Mammary epithelial cell (primary cell): ENCODE measurements at regions of chr17 and their contacts with region 1.

Region 1: DNA sequence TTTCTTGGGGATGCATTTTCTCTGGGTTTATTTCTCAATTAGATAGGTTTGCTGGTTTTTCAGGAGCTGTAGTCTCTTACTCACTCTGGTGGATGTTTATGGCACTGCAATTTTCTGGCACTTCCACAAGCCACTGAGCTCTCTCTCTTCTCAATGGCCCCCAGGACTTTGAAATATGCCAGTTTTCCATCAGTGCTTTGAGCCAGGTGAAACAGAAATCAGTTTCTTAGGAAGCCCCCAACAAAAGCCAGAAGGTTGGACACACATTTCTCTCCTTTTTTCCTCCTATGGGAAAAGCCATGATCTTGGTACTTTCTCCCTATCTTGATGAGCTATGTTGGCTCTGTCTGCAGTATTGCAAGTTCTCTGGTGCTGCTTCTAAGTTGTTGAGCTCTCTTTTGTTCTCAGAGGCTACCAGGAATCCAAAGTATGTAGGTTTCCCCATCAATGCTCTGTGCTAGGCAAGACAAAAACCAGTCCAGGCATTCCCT is 90.7 kb upstream of the SMIM36 start:
- DNase-seq: peak; percentile 27
- H3K4me3 ChIP-seq: no peak overlapping the region
- H3K27ac ChIP-seq: no peak overlapping the region
- H3K4me1 ChIP-seq: no peaks in the 10 kb centered on the region
- H3K27me3 ChIP-seq: no peaks in the 10 kb centered on the region
- CTCF ChIP-seq: peak; percentile 75 to 81

Region 2: GRCh38 chr17:55584050-55584685 is 17.8 kb before region 1 on chr17:
- CTCF ChIA-PET with region 1: no interaction called
- dilution Hi-C with region 1: no loop called
- in situ Hi-C with region 1: no loop called
- intact Hi-C with region 1: loop called (anchors 2 kb)
- DNase-seq: peak; percentile 53
- H3K4me3 ChIP-seq: no peak overlapping the region
- H3K27ac ChIP-seq: no peak overlapping the region
- H3K4me1 ChIP-seq: peaks cover 11% of the 10 kb centered on the region
- H3K27me3 ChIP-seq: no peaks in the 10 kb centered on the region
- CTCF ChIP-seq: no peak

Region 3: GRCh38 chr17:55641676-55642081 is 39.8 kb after region 1 on chr17:
- CTCF ChIA-PET with region 1: interaction called, 12 read pairs
- dilution Hi-C with region 1: no loop called
- in situ Hi-C with region 1: no loop called
- intact Hi-C with region 1: no loop called
- DNase-seq: peak; percentile 31
- H3K4me3 ChIP-seq: no peak overlapping the region
- H3K27ac ChIP-seq: no peak overlapping the region
- H3K4me1 ChIP-seq: no peaks in the 10 kb centered on the region
- H3K27me3 ChIP-seq: no peaks in the 10 kb centered on the region
- CTCF ChIP-seq: peak; percentile 63 to 75

Region 4: DNA sequence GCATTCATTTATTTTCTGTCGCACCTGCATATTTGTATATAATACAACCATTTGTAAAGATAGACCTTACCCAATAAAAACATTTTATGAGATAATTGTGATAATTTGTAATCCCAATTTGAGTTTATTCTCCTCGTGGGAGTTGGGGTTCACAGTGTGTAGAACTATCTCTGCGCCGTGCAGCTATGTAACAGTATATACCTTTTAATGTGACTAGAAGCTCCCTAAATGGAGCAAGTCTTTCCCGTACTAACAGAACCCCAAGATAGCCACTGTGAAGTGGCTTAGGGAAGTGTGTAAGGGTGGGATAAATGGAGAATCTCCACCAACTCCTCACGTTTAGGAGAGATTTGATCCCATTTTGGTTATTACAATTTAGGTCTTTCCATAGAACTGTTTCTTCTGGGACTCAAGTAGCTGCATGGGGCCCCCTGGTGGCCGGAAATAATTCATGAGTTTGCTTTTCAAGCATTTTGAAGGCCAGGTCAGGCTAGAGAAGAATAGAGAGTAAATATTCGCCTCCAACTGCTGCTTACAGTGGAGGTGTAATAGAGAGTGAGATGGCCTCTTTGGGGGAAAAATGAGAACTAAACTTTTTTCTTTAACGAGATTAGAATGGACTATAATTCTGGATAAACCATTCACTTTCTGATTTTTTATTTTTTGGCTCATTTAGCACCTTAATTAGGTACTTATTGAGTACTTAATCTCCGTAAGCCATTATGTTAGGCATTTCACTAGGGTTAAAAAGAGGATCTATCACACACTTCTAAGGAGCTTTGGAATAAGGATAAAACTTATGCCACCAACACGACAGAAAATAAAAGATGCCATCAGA is 116.2 kb after region 1 on chr17:
- CTCF ChIA-PET with region 1: no interaction called
- dilution Hi-C with region 1: no loop called
- in situ Hi-C with region 1: no loop called
- intact Hi-C with region 1: loop called (anchors 5 kb)
- DNase-seq: peak; percentile 42
- H3K4me3 ChIP-seq: no peak overlapping the region
- H3K27ac ChIP-seq: no peak overlapping the region
- H3K4me1 ChIP-seq: peaks cover 3% of the 10 kb centered on the region
- H3K27me3 ChIP-seq: no peaks in the 10 kb centered on the region
- CTCF ChIP-seq: peak; percentile 78 to 80

Region 5: DNA sequence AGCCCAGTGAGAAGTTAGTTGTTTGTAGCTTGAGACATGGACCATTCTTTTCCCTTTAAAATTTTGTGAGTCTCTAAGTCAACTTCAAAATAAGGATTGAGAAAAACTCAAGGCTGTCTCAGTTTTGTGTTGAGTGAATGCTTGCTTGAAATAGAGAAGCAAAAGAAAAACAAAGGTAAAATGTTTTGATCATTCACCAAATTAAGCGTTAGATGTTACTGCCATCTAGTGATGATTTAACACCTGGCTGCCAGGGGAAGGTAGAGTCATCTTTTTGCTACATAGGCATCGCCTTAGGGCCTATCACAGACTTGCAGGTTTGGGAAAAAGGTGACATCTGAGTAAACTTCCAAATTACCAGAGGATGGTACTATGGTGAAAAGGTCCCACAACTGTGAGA is 223.3 kb after region 1 on chr17:
- CTCF ChIA-PET with region 1: no interaction called
- dilution Hi-C with region 1: no loop called
- in situ Hi-C with region 1: no loop called
- intact Hi-C with region 1: loop called (anchors 1 kb)
- DNase-seq: peak; percentile 7
- H3K4me3 ChIP-seq: no peak overlapping the region
- H3K27ac ChIP-seq: no peak overlapping the region
- H3K4me1 ChIP-seq: no peaks in the 10 kb centered on the region
- H3K27me3 ChIP-seq: peaks cover 6% of the 10 kb centered on the region
- CTCF ChIP-seq: peak; percentile 46 to 53